A673 (cell line): ENCODE measurements at regions of chr4 and their contacts with region 1.

Region 1: GRCh38 chr4:2472187-2472586 is 3.3 kb downstream of the RNF4 start:
- DNase-seq: no peak
- H3K4me3 ChIP-seq: no peak overlapping the region
- H3K27ac ChIP-seq: no peak overlapping the region
- H3K4me1 ChIP-seq: no peaks in the 10 kb centered on the region
- H3K27me3 ChIP-seq: no peaks in the 10 kb centered on the region
- CTCF ChIP-seq: no peak

Region 2: GRCh38 chr4:1231637-1232360 is 1240.4 kb before region 1 on chr4:
- CTCF ChIA-PET with region 1: no interaction called
- POLR2A ChIA-PET with region 1: no interaction called
- intact Hi-C with region 1: no loop called
- DNase-seq: no peak
- H3K4me3 ChIP-seq: no peak overlapping the region
- H3K27ac ChIP-seq: no peak overlapping the region
- H3K4me1 ChIP-seq: no peaks in the 10 kb centered on the region
- H3K27me3 ChIP-seq: no peaks in the 10 kb centered on the region
- CTCF ChIP-seq: no peak

Region 3: GRCh38 chr4:1992468-1993168 is 479.6 kb before region 1 on chr4:
- CTCF ChIA-PET with region 1: no interaction called
- POLR2A ChIA-PET with region 1: no interaction called
- intact Hi-C with region 1: no loop called
- DNase-seq: no peak
- H3K4me3 ChIP-seq: no peak overlapping the region
- H3K27ac ChIP-seq: no peak overlapping the region
- H3K4me1 ChIP-seq: no peaks in the 10 kb centered on the region
- H3K27me3 ChIP-seq: no peaks in the 10 kb centered on the region
- CTCF ChIP-seq: no peak

Region 4: DNA sequence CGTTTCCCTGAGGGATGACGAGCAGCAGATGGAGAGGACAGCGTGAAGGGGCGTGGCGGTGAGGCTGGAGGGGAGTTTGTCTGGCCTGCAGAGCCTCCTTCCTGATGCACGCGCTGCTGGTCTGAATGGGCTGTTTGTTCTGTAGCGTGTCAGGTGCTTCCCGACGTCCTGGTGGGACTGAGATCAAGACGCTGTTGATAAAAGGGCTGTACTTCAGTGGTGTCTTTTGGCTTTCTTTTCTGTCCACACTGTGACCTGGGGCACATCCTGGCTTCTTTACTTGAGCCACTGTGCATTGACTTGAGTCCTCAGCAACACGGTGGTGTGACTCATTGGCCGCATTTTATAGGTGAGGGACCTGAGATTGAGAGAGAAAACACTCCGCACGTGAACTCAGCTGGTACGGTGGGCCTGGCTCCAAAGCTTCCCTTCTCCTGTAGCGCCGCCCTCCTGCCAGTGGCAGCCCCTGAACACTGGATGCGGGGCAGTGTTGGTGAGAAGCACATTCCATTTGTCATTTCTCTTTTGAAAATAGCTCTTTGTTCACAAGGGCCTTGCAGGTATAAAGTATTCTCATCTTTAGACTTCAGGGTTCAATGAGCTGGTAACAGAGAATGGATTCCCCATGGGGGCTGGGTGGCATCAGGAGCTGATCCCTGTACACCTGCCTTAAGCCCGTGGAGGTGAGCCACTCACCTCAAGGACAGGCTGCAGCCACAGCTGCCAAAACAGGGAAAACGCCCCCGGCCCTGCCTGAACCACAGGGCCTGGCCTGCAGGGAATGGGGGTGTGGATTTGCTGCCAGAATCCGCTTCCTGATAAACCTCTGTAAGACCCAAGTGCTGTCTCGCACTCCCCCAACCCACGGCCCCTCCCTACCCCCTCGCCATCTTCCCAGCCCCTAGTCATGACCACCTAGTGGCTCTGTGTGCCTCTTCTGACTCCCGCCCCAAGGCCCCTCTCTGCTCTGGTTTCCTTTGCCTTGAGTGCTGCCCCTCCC is 1943.9 kb after region 1 on chr4:
- CTCF ChIA-PET with region 1: no interaction called
- POLR2A ChIA-PET with region 1: interaction called, 19 read pairs
- intact Hi-C with region 1: no loop called
- DNase-seq: no peak
- H3K4me3 ChIP-seq: no peak overlapping the region
- H3K27ac ChIP-seq: no peak overlapping the region
- H3K4me1 ChIP-seq: no peaks in the 10 kb centered on the region
- H3K27me3 ChIP-seq: no peaks in the 10 kb centered on the region
- CTCF ChIP-seq: no peak